A549 (cell line): ENCODE measurements at regions of chr5 and their contacts with region 1.

Region 1: GRCh38 chr5:154647114-154647760 is 107.9 kb upstream of the LARP1 start:
- DNase-seq: no peak
- ATAC-seq: peak in 1 of 2 experiments; percentile 21; a peak in 2 of 6 replicates
- H3K4me3 ChIP-seq: no peak overlapping the region
- H3K27ac ChIP-seq: no peak overlapping the region
- H3K4me1 ChIP-seq: no peaks in the 10 kb centered on the region
- CTCF ChIP-seq: no peak
- EP300 ChIP-seq: no peak
- POLR2A ChIP-seq: no peak
- RAD21 ChIP-seq: no peak

Region 2: DNA sequence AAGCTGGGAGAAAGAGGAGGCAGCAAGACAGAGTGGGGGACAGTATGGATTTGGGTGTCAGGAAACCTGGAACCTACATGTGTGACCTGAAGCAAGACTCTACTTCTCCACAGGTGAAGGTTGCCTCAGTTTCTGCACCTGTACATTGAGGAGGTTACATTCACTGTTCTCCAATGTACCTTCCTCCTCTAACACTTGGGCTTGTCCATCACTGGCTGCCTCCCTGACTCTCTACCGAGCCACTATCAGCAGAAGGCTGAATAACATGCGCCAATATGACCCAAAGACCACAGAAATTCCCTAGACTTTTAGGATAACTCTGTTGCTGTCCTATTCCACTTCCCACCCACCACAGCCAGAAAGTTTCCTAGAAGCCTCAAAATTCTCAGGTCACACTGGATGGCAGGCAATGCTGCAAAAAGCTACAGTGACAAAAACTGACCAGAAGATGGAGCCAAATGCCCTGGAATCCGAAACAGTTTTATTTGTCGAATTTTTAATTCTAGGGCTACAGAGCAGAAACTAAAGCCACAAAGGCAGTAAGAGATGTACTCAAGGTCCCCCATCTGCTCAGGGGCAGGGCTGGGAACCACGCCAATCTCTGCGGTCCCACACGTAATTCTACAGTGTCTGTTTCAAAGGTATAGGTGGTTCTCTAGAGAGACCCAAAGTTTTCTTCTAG is 673.0 kb before region 1 on chr5:
- CTCF ChIA-PET with region 1: interaction called, 12 read pairs
- POLR2A ChIA-PET with region 1: no interaction called
- DNase-seq: peak; percentile 35 to 56
- ATAC-seq: peak; percentile 65 to 87; a peak in 5 of 6 replicates
- H3K4me3 ChIP-seq: no peak overlapping the region
- H3K27ac ChIP-seq: no peak overlapping the region
- H3K4me1 ChIP-seq: no peaks in the 10 kb centered on the region
- CTCF ChIP-seq: peak; percentile 92
- EP300 ChIP-seq: no peak
- POLR2A ChIP-seq: no peak
- RAD21 ChIP-seq: peak; percentile 90 to 91

Region 3: DNA sequence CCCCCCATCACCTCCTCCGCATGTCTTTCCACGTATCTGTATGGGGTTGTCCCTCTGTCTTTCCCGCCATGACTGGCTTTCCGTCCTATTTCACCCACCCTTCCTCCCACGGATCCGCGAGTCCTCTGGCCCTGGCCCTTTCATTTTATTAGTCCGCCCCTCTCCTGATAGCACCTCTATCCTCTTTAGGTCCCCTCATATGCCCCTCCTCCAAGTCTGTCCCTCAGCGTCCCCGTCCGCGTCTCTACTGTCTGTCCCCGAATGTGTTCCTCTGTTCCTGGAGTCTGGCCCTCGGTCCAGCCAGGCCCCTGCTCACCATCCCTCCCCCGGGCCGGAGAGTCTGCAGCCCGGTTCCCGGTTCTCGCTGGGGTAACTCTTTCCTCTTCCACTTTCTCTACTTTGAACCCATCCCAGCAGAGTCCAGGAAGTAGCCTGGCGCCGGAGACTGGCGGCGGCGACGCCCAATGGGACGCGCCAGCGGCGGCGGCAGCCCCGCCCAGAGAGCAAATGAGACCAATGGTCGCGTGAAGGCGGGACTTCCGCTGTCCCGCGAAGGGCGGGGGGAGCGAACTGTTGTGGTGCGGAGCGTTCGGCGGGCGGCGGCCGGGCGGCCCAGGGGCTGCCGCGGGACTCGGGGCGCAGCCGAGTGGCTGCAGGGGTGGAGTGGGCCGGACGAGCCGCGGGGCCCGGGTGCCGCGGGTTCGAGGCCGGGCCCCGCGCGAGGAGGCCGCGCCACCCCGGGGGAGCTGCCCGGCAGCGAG is 201.6 kb before region 1 on chr5 and contains the start of gene SAP30L:
- CTCF ChIA-PET with region 1: no interaction called
- POLR2A ChIA-PET with region 1: no interaction called
- DNase-seq: peak; percentile 89 to 100
- ATAC-seq: peak; percentile 94 to 96
- H3K4me3 ChIP-seq: peak within 1 kb of the TSS; percentile 95
- H3K27ac ChIP-seq: peak within 1 kb of the TSS; percentile 70 to 96
- H3K4me1 ChIP-seq: peaks cover 29% of the 10 kb centered on the region
- CTCF ChIP-seq: no peak
- EP300 ChIP-seq: no peak
- POLR2A ChIP-seq: peak; percentile 48
- RAD21 ChIP-seq: no peak
- polyA plus RNA-seq, gene SAP30L: 40.8 and 50.3 TPM in 2 replicates

Region 4: DNA sequence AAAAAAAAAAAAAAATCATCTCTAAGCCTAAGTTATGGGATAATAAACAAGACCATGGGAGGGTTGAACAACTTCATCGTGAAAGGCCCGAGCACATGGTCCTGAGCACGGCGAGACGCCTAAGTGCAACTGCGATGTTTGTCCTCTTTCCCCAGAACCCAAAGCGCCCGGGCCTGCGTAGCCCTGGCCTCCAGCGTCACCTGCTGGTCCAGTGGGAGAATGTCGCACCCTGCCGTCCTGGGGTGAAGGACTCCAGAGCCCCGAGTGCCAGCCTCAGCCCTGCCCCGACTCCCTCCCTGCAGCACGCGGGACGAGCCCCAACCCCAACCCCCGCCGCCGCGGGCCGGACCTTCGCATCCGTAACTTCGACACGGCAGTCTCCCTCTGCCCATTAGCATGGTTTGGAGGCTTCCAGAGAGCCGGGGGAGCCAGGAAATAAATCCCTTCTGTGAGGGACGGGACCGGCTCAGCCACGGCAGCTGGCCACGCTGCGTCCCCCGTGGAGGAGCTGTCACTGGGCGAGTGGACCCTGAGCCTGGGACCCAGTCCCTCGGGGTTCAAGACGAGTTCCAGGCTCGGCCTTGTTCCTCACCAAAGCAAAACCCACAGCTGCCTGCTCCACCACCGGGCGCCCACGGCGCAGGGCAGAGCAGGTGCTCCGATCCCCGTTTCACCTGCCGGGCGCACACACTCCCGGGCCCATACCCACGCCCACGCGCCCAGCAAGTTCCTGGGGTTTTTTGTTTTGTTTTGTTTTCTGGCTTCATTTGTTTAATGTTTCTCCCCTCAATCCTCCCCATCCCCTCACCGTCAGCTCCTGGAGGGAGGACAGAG is 36.7 kb before region 1 on chr5:
- CTCF ChIA-PET with region 1: no interaction called
- POLR2A ChIA-PET with region 1: no interaction called
- DNase-seq: peak; percentile 84 to 88
- ATAC-seq: peak; percentile 93 to 98
- H3K4me3 ChIP-seq: peak overlapping the region; percentile 33
- H3K27ac ChIP-seq: peak overlapping the region in 1 of 2 experiments; percentile 69; a peak in 3 of 6 replicates
- H3K4me1 ChIP-seq: peaks cover 4% of the 10 kb centered on the region; the same call in 1 of the 3 replicates
- CTCF ChIP-seq: peak; percentile 94
- EP300 ChIP-seq: no peak
- POLR2A ChIP-seq: no peak
- RAD21 ChIP-seq: peak; percentile 99

Region 5: DNA sequence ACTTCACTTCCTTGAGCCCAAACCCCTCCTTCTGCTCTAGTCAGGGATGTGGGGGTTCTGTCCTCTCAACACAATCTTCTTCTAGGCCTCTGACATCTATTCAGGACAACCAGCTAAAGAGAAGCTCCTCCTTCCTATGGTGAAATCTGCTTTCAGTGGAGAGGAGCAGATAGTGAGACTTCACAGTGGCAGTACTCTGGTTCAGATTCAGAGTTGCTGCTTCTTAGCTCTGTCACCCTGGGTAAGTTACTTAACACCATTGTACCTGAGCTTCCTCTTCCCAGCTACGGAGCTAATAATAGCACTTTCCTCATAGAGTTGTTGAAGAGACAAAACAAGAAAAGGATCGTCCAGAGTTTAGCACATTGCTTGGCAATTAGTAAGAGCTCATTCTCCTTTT is 30.7 kb after region 1 on chr5:
- CTCF ChIA-PET with region 1: interaction called, 24 read pairs
- POLR2A ChIA-PET with region 1: no interaction called
- DNase-seq: peak in 1 of 2 experiments; percentile 11
- ATAC-seq: no peak
- H3K4me3 ChIP-seq: no peak overlapping the region
- H3K27ac ChIP-seq: no peak overlapping the region
- H3K4me1 ChIP-seq: peaks cover 3% of the 10 kb centered on the region; the same call in 2 of the 3 replicates
- CTCF ChIP-seq: no peak
- EP300 ChIP-seq: no peak
- POLR2A ChIP-seq: no peak
- RAD21 ChIP-seq: no peak

Region 6: DNA sequence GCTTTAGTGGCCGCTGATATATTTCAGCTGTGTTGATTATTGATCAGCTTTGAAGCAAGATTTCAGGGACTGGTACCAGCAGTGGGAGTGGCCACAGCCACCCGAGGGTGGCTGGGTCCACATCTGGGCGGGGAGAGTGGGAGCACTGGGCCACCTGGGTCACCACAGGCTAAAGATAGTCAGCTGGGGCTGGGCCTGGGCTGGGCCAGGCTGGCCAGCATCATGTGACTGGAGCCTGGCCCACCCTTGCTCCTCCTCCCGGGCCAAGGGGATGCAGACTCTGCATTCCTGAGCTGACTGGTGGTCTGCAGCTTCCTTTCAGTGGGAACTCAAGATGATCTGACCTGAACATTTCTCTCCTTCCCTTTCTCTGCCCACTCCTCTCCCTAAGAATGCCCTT is 135.1 kb after region 1 on chr5:
- CTCF ChIA-PET with region 1: interaction called, 14 read pairs
- POLR2A ChIA-PET with region 1: no interaction called
- DNase-seq: no peak
- ATAC-seq: peak in 1 of 2 experiments; percentile 18; a peak in 2 of 6 replicates
- H3K4me3 ChIP-seq: no peak overlapping the region
- H3K27ac ChIP-seq: no peak overlapping the region
- H3K4me1 ChIP-seq: peaks cover 73% of the 10 kb centered on the region
- CTCF ChIP-seq: no peak
- EP300 ChIP-seq: no peak
- POLR2A ChIP-seq: no peak
- RAD21 ChIP-seq: no peak

Region 7: GRCh38 chr5:154801083-154801482 is 153.8 kb after region 1 on chr5:
- CTCF ChIA-PET with region 1: interaction called, 48 read pairs
- POLR2A ChIA-PET with region 1: no interaction called
- DNase-seq: no peak
- ATAC-seq: no peak
- H3K4me3 ChIP-seq: no peak overlapping the region
- H3K27ac ChIP-seq: no peak overlapping the region
- H3K4me1 ChIP-seq: no peaks in the 10 kb centered on the region
- CTCF ChIP-seq: no peak
- EP300 ChIP-seq: no peak
- POLR2A ChIP-seq: no peak
- RAD21 ChIP-seq: no peak

Region 8: GRCh38 chr5:154834053-154834452 is 186.8 kb after region 1 on chr5:
- CTCF ChIA-PET with region 1: interaction called, 17 read pairs
- POLR2A ChIA-PET with region 1: no interaction called
- DNase-seq: no peak
- ATAC-seq: no peak
- H3K4me3 ChIP-seq: no peak overlapping the region
- H3K27ac ChIP-seq: no peak overlapping the region
- H3K4me1 ChIP-seq: peaks cover 28% of the 10 kb centered on the region
- CTCF ChIP-seq: no peak
- EP300 ChIP-seq: no peak
- POLR2A ChIP-seq: no peak
- RAD21 ChIP-seq: no peak